ENCODE measurements at regions of chr16 and their contacts with region 1.

Region 1: DNA sequence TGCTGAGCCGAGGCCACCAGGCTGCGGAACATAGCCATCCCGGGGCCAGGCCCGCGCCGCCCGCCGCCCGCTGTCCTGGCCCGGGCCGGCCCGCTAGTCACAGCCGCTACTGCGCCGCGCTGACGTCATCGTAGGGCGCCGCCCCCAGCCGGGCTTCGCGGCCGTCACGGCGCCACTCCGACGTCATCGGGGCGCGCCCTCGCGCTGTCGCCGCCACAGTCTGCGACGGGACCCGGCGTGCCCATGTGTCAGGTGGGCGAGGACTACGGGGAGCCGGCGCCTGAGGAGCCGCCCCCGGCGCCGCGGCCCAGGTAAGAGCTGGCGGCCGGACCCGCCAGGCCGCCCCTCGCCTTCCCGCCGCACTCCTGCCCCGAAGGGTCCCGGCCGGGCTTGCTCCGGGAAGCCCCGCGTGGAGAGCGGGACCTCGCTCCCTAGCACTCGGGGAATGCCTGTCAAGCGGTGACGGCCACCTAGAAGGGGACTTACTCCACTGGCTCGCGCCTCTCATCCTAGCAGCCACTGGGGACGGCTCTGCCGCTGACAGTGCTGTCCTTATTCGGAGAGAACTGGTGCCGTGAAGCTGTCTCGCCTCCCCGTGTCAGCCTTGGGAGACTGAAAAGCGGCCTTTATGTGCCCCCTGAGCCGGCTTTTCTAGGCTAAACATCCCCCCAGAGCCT is at the starts of genes CTU2 and RNF166:
- DNase-seq: peak; percentile 98
- H3K4me3 ChIP-seq: peak within 1 kb of the TSS; percentile 85 to 99 (median 89)
- H3K27ac ChIP-seq: peak within 1 kb of the TSS; percentile 77 to 98 (median 94)
- H3K4me1 ChIP-seq: peaks cover 47 to 76% (median 62%) of the 10 kb centered on the region in 6 donors
- H3K27me3 ChIP-seq: no peaks in the 10 kb centered on the region
- CTCF ChIP-seq: peak in 3 of 11 experiments; percentile 5 to 13 (median 11)
- POLR2A ChIP-seq: peak in 2 of 3 donors; percentile 81 to 96
- total RNA-seq, gene CTU2: 7.2 to 28.2 (median 11.7) TPM
- total RNA-seq, gene RNF166: 63.7 to 135 (median 99.1) TPM

Region 2: GRCh38 chr16:88510091-88510994 is 196.1 kb before region 1 on chr16:
- intact Hi-C with region 1: no loop called
- DNase-seq: no peak
- H3K4me3 ChIP-seq: no peak overlapping the region
- H3K27ac ChIP-seq: no peak overlapping the region
- H3K4me1 ChIP-seq: peaks cover 0 to 5% (median 3%) of the 10 kb centered on the region in 6 donors
- H3K27me3 ChIP-seq: no peaks in the 10 kb centered on the region
- CTCF ChIP-seq: no peak
- POLR2A ChIP-seq: no peak

Region 3: GRCh38 chr16:88569985-88570690 is 136.3 kb before region 1 on chr16 and contains the start of gene ZC3H18:
- intact Hi-C with region 1: loop called (anchors 10 kb)
- DNase-seq: peak; percentile 99
- H3K4me3 ChIP-seq: peak within 1 kb of the TSS; percentile 90 to 98 (median 93)
- H3K27ac ChIP-seq: peak within 1 kb of the TSS; percentile 77 to 95 (median 87)
- H3K4me1 ChIP-seq: peaks cover 23 to 52% (median 38%) of the 10 kb centered on the region in 6 donors
- H3K27me3 ChIP-seq: no peaks in the 10 kb centered on the region
- CTCF ChIP-seq: peak in 1 of 11 experiments; percentile 41
- POLR2A ChIP-seq: peak in 2 of 3 donors; percentile 24 to 86
- total RNA-seq, gene ZC3H18: 24.1 to 65.2 (median 53.6) TPM

Region 4: GRCh38 chr16:88650749-88651275 is 55.6 kb before region 1 on chr16 and contains the start of gene CYBA:
- intact Hi-C with region 1: loop called (anchors 10 kb)
- DNase-seq: peak; percentile 98
- H3K4me3 ChIP-seq: peak within 1 kb of the TSS; percentile 82 to 97 (median 89)
- H3K27ac ChIP-seq: peak within 1 kb of the TSS; percentile 85 to 99 (median 96)
- H3K4me1 ChIP-seq: peaks cover 30 to 76% (median 61%) of the 10 kb centered on the region in 6 donors
- H3K27me3 ChIP-seq: no peaks in the 10 kb centered on the region
- CTCF ChIP-seq: peak in 1 of 11 experiments; percentile 13
- POLR2A ChIP-seq: peak; percentile 29 to 55 (median 37)
- total RNA-seq, gene CYBA: 557 to 820 (median 628) TPM

Region 5: GRCh38 chr16:88737298-88738150 is 31.1 kb after region 1 on chr16:
- intact Hi-C with region 1: no loop called
- DNase-seq: peak; percentile 96
- H3K4me3 ChIP-seq: peak overlapping the region in 1 of 8 donors; percentile 17
- H3K27ac ChIP-seq: peak overlapping the region in 5 of 8 donors; percentile 76 to 86 (median 81)
- H3K4me1 ChIP-seq: peaks cover 6 to 46% (median 30%) of the 10 kb centered on the region in 6 donors
- H3K27me3 ChIP-seq: no peaks in the 10 kb centered on the region
- CTCF ChIP-seq: peak; percentile 96 to 100 (median 99)
- POLR2A ChIP-seq: no peak

Region 6: GRCh38 chr16:88893127-88893968 is 186.9 kb after region 1 on chr16:
- intact Hi-C with region 1: no loop called
- DNase-seq: no peak
- H3K4me3 ChIP-seq: no peak overlapping the region
- H3K27ac ChIP-seq: no peak overlapping the region
- H3K4me1 ChIP-seq: peaks cover 4 to 23% (median 12%) of the 10 kb centered on the region in 6 donors
- H3K27me3 ChIP-seq: no peaks in the 10 kb centered on the region
- CTCF ChIP-seq: no peak
- POLR2A ChIP-seq: no peak

Measured in spleen (tissue), 13 donors.